GM10248 (cell line): ENCODE measurements at regions of chr7 and their contacts with region 1.

Region 1: DNA sequence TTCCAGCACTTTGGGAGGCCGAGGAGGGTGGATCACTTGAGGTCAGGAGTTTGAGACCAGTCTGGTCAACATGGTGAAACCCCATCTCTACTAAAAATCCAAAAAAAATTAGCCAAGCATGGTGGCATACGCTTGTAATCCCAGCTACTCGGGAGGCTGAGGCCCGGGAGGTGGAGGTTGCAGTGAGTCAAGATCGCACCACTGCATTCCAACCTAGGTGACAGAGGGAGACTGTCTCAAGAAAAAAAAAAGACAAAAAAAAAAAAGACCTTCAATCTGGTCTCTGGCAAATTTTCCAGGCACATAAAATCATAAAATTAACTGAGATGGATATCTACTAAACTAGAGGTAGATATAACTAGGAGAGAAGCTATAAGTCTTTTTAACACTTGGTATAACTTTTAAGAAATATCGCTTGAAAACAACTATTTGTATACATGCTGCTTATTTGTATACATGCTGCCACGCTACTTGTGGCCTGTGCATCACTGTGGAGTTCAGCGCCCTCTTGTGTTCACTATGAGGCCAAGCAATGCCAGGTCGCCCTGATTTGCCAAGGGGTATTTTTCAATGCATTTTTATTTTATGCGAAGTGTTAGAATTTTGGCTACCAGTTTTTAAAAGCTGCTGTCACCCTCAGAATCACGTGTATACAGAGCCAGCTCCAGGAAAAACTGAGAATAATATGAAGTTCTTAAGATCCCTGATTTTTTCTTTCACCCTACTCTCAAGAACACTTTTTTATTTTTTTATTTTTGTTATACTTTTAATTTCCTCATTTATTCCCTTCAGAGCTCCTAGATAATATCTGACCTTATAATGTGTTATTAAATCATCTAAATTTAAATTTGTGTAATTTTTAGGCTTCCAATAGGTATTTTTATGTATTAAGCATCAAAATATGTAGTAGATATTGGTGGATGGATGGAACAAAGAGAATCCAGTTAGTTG is 26.7 kb downstream of the CYCS start:
- DNase-seq: peak; percentile 78
- CTCF ChIP-seq: peak; percentile 93

Region 2: GRCh38 chr7:24800667-24801066 is 297.7 kb before region 1 on chr7:
- CTCF ChIA-PET with region 1: interaction called, 14 read pairs
- POLR2A ChIA-PET with region 1: no interaction called
- DNase-seq: no peak
- CTCF ChIP-seq: no peak

Region 3: DNA sequence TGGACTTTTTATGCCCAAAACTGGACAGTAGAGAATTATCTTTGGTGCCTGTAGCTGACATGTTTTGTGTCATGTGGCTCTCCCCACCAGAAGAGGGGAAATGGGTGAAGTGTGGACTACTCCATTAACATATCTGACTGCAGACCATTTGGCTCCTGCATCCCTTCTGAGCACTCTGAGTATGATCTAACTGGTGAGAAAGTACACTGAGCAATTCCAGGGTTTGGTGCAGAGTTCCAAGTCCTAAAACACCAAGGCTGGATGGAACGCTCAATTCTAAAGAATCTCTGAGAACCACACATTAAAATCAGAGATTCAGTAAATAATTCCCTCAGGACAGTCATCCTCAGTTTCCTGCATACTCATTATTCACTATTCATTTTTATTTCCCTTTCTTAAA is 95.6 kb before region 1 on chr7:
- CTCF ChIA-PET with region 1: no interaction called
- POLR2A ChIA-PET with region 1: no interaction called
- DNase-seq: no peak
- CTCF ChIP-seq: no peak

Region 4: GRCh38 chr7:25037325-25037724 is 61.0 kb before region 1 on chr7:
- CTCF ChIA-PET with region 1: no interaction called
- POLR2A ChIA-PET with region 1: no interaction called
- DNase-seq: no peak
- CTCF ChIP-seq: no peak

Region 5: GRCh38 chr7:25087855-25088254 is 10.5 kb before region 1 on chr7:
- CTCF ChIA-PET with region 1: interaction called, 188 read pairs
- POLR2A ChIA-PET with region 1: interaction called, 4 read pairs
- DNase-seq: peak; percentile 48
- CTCF ChIP-seq: no peak

Region 6: GRCh38 chr7:25117226-25118047 is 19.1 kb after region 1 on chr7:
- CTCF ChIA-PET with region 1: interaction called, 57 read pairs
- POLR2A ChIA-PET with region 1: no interaction called
- DNase-seq: peak; percentile 70
- CTCF ChIP-seq: no peak